A549 (cell line): ENCODE measurements at regions of chr19 and their contacts with region 1.

Region 1: GRCh38 chr19:36169084-36169760 is 17.0 kb upstream of the COX7A1 start:
- DNase-seq: no peak
- ATAC-seq: no peak
- H3K4me3 ChIP-seq: no peak overlapping the region
- H3K27ac ChIP-seq: no peak overlapping the region
- H3K4me1 ChIP-seq: 0 out of 3 replicates have a peak, but pooled peaks cover 3% of the 10 kb centered on the region
- CTCF ChIP-seq: no peak
- EP300 ChIP-seq: no peak
- POLR2A ChIP-seq: no peak
- RAD21 ChIP-seq: no peak

Region 2: GRCh38 chr19:36152352-36153091 is 16.7 kb before region 1 on chr19 and contains the start of gene COX7A1:
- CTCF ChIA-PET with region 1: interaction called, 34 read pairs
- POLR2A ChIA-PET with region 1: no interaction called
- DNase-seq: no peak
- ATAC-seq: peak in 1 of 2 experiments; percentile 5; a peak in 1 of 6 replicates
- H3K4me3 ChIP-seq: no peak within 1 kb of the TSS
- H3K27ac ChIP-seq: no peak within 1 kb of the TSS
- H3K4me1 ChIP-seq: no peaks in the 10 kb centered on the region
- CTCF ChIP-seq: no peak
- EP300 ChIP-seq: no peak
- POLR2A ChIP-seq: no peak
- RAD21 ChIP-seq: no peak
- polyA plus RNA-seq, gene COX7A1: not detected in 2 replicates

Region 3: DNA sequence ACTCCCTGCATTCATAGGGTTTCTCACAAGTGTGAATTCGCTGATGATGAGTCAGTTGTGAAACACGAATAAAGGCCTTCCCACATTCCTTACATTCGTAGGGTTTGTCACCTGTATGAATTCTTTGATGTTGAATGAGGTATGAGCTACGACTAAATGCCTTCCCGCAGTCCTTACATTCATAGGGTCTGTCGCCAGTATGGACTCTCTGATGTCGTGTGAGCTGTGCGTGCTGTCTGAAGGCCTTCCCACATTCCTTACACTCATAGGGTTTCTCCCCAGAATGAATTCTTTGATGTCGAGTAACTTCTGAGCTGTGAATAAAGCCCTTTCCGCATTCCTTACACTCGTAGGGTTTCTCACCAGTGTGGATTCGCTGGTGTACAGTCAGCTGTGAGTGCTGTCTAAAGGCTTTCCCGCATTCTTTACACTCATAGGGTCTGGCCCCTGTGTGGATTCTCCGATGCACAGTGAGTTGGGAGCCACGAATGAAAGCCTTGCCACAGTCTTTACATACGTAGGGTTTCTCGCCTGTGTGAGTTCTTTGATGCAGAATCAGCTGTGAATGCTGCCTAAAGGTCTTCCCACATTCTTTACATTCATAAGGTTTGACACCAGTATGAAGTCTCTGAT is 13.5 kb after region 1 on chr19:
- CTCF ChIA-PET with region 1: interaction called, 17 read pairs
- POLR2A ChIA-PET with region 1: interaction called, 5 read pairs
- DNase-seq: peak in 1 of 2 experiments; percentile 35
- ATAC-seq: peak; percentile 19 to 22; a peak in 3 of 6 replicates
- H3K4me3 ChIP-seq: no peak overlapping the region
- H3K27ac ChIP-seq: no peak overlapping the region
- H3K4me1 ChIP-seq: no peaks in the 10 kb centered on the region
- CTCF ChIP-seq: no peak
- EP300 ChIP-seq: no peak
- POLR2A ChIP-seq: no peak
- RAD21 ChIP-seq: no peak